IMR-90 (cell line): ENCODE measurements at regions of chr7 and their contacts with region 1.

Region 1: GRCh38 chr7:128455551-128456254 is at the start of gene HILPDA:
- DNase-seq: peak; percentile 95
- ATAC-seq: peak; percentile 92
- H3K4me3 ChIP-seq: peak within 1 kb of the TSS; percentile 82
- H3K27ac ChIP-seq: peak within 1 kb of the TSS; percentile 89
- H3K4me1 ChIP-seq: peaks cover 17% of the 10 kb centered on the region
- H3K27me3 ChIP-seq: no peaks in the 10 kb centered on the region; the same call in 1 of the 2 replicates
- CTCF ChIP-seq: no peak
- POLR2A ChIP-seq: peak; percentile 82
- RAD21 ChIP-seq: no peak
- total RNA-seq, gene HILPDA: 23.6 and 31.2 TPM in 2 replicates

Region 2: DNA sequence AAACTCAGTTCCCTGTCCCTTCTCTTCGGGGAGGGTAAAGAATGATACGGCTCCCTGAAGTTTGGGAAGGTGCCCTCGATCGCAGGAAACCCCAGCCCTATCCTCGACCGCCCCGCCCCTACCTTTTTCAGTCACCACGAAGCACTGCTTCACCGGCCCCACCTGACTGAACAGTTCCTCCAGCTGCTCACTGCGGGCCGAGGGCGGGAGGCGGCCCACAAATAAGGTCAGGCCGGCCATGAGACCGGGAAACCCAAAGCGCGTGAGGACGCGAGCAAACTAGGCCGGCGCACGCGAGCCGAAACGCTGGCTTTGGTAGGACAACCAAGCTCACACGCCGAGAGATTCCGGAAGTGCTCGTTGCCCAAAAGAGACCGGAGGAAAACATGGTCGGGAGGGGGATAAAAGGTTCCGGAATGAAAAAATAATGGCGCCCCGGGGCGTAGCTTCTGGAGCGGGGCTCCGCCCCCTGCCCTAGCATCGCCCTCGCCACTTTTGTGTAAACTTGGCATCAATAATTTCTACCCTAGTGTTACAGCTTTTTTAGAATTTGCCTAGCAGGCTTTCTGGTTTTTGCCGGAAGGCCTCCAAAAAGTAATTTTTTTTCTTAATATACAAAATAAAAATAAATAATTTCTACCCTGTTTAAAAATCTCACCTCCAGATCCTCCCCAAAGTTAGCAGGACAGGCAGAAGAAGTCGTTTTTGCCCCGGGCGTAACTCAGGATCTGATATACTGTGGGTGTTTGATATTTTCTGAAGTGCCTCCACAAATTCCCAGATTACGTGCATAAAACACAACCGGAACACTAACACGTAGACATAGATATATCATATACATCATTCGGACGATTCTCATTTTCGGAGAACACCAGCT is 111.9 kb before region 1 on chr7 and contains the start of gene RBM28:
- CTCF ChIA-PET with region 1: interaction called, 3 read pairs
- POLR2A ChIA-PET with region 1: no interaction called
- dilution Hi-C with region 1: no loop called
- in situ Hi-C with region 1: no loop called
- intact Hi-C with region 1: loop called (anchors 2 kb)
- DNase-seq: peak; percentile 90
- ATAC-seq: peak; percentile 97
- H3K4me3 ChIP-seq: peak within 1 kb of the TSS; percentile 78
- H3K27ac ChIP-seq: peak within 1 kb of the TSS; percentile 91
- H3K4me1 ChIP-seq: peaks cover 2% of the 10 kb centered on the region; the same call in 1 of the 2 replicates
- H3K27me3 ChIP-seq: peaks cover 9% of the 10 kb centered on the region
- CTCF ChIP-seq: no peak
- POLR2A ChIP-seq: peak; percentile 75
- RAD21 ChIP-seq: no peak
- total RNA-seq, gene RBM28: 12.4 and 18.6 TPM in 2 replicates

Region 3: GRCh38 chr7:128398016-128398840 is 57.5 kb before region 1 on chr7:
- CTCF ChIA-PET with region 1: interaction called, 3 read pairs
- POLR2A ChIA-PET with region 1: no interaction called
- dilution Hi-C with region 1: no loop called
- in situ Hi-C with region 1: no loop called
- intact Hi-C with region 1: loop called (anchors 1 kb)
- DNase-seq: peak; percentile 41
- ATAC-seq: peak; percentile 98
- H3K4me3 ChIP-seq: no peak overlapping the region
- H3K27ac ChIP-seq: no peak overlapping the region
- H3K4me1 ChIP-seq: no peaks in the 10 kb centered on the region
- H3K27me3 ChIP-seq: no peaks in the 10 kb centered on the region
- CTCF ChIP-seq: peak; percentile 88
- POLR2A ChIP-seq: no peak
- RAD21 ChIP-seq: peak; percentile 82

Region 4: DNA sequence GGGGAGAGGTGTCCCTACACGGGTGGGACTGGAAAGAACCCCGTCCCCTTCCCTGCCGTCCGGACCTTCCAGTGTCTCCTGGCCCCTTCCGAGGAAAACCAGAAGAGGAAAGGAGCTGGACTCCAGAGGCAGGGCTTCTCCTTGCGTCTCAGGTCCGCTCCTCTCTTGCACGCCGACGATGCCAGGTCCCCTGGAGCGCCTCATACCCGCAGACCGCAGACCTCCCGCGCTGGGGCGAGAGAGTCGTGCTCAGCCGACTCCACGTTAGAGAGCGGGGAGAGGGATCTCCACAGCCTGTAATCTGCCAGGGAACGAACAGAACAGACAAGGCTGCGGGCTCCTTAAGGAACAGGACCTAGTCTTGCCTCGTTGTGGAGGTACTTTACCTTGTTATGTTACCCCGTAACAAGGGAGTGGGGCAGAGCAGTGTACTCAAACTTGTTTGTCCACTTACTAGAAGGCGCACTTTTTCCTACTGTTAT is 45.5 kb before region 1 on chr7:
- CTCF ChIA-PET with region 1: no interaction called
- POLR2A ChIA-PET with region 1: no interaction called
- dilution Hi-C with region 1: no loop called
- in situ Hi-C with region 1: no loop called
- intact Hi-C with region 1: no loop called
- DNase-seq: peak; percentile 81
- ATAC-seq: peak; percentile 46
- H3K4me3 ChIP-seq: peak overlapping the region; percentile 96
- H3K27ac ChIP-seq: peak overlapping the region; percentile 69
- H3K4me1 ChIP-seq: peaks cover 11% of the 10 kb centered on the region
- H3K27me3 ChIP-seq: peaks cover 8% of the 10 kb centered on the region
- CTCF ChIP-seq: no peak
- POLR2A ChIP-seq: no peak
- RAD21 ChIP-seq: no peak

Region 5: DNA sequence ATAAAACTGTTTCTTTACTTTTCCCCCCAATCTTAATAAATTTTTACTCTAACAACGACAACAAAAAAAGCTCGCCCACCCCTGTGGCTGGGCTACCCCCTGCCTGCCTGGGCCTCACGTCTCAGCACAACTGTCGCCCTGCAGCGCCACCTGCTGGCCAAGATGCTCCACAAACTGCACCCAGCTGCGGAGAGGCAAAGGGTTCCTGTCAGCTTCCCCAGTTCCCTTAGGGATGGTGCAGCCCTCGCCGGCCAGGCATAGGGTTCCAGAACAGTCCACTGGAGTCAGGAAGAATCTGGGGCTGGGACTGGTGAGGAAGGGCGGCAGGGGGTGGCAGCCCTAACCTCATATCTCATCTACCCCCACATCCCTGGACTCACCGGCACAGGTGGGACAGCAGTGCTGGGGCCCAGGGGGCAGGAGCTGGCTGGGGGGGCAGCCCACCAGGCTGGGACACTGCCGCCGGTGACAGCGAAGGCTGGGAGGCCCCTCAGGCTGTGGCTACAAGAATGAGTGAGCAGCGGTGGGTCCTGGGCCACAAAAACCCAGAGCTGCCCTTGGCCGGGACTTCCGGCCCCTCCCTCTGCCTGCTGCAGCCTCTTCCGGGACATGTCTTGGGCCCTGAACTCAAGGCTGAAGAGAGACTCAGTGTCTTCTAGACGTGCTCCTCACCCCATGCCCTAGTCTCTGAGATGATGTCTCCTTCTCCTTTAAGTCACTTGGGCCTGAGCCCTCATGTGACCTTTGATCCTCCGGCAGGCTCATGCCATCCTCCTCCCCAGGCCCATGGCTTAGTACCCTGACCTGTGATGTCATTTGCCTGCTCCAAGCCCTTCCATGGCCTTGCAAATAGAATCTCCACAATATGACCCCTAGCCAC is 428.2 kb after region 1 on chr7:
- CTCF ChIA-PET with region 1: no interaction called
- POLR2A ChIA-PET with region 1: no interaction called
- dilution Hi-C with region 1: no loop called
- in situ Hi-C with region 1: loop called (anchors 25 kb)
- intact Hi-C with region 1: no loop called
- DNase-seq: peak; percentile 54
- ATAC-seq: peak; percentile 79
- H3K4me3 ChIP-seq: no peak overlapping the region
- H3K27ac ChIP-seq: no peak overlapping the region
- H3K4me1 ChIP-seq: no peaks in the 10 kb centered on the region
- H3K27me3 ChIP-seq: peaks cover 7% of the 10 kb centered on the region; the same call in 1 of the 2 replicates
- CTCF ChIP-seq: peak; percentile 87
- POLR2A ChIP-seq: no peak
- RAD21 ChIP-seq: peak; percentile 73